HAP-1 (cell line): ENCODE measurements at regions of chr17 and their contacts with region 1.

Region 1: GRCh38 chr17:27793168-27793905 is 7.0 kb downstream of the NOS2 start:
- DNase-seq: peak; percentile 32 to 69
- H3K4me3 ChIP-seq: peak overlapping the region; percentile 21
- H3K4me1 ChIP-seq: peaks cover 4% of the 10 kb centered on the region; the same call in 1 of the 2 replicates
- H3K27me3 ChIP-seq: no peaks in the 10 kb centered on the region; the same call in 1 of the 2 replicates

Region 2: DNA sequence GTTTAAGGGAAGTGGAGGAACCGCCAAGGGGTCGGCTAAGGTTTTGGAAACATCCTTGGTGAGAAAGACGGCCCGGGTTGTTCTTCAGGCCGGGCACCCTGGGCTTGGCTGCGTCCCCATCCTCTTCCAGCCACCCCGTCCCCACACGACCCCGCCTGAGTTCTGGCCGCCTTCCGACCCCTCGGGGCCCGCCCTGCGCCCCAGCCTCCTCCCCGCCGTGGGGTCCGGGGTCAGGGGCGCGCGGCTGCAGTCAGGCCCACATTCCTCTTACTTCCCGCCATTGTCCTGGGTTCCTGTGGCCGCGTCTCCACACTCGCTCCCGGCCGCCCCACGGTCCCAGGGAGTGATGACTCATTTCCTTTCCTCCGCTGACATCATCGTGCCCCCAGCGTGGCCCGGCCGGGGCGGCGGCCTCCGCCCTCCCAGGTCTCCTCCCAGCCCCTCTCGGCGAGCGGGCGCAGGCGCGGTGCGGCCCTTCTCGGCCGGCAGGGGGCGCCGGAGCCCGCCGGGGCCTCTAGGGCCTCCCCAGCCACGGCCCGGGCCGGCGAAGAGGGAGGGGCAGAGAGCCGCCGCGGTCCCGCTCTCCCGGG is 439.8 kb before region 1 on chr17:
- in situ Hi-C with region 1: loop called (anchors 25 kb)
- DNase-seq: peak; percentile 93
- H3K4me3 ChIP-seq: peak overlapping the region; percentile 90
- H3K4me1 ChIP-seq: peaks cover 15% of the 10 kb centered on the region
- H3K27me3 ChIP-seq: no peaks in the 10 kb centered on the region

Region 3: GRCh38 chr17:28384281-28385036 is 591.1 kb after region 1 on chr17:
- in situ Hi-C with region 1: loop called (anchors 25 kb)
- DNase-seq: no peak
- H3K4me3 ChIP-seq: no peak overlapping the region
- H3K4me1 ChIP-seq: no peaks in the 10 kb centered on the region
- H3K27me3 ChIP-seq: no peaks in the 10 kb centered on the region